Breast epithelium (tissue), 4 donors: ENCODE measurements at regions of chr3 and their contacts with region 1.

Region 1: DNA sequence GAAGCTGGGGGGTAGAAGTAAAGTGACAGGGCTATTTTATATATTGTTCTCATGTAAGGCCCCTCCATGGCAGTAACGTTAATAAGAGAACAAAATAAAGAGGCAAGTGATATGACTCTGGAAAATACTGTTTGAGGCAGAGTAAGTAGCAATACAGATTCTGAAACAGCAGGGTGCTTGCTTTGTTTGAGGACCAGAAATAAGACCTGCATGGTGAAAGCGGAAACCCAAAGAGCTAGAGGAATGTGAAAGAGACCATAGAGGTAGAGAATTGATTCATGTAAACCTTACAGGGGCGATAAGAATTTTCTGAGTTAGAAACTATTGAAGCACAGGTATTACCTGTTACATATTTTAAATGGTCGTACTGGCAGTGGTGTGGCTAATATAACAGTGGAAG is 1517.1 kb downstream of the SI start:
- DNase-seq: no peak
- H3K4me3 ChIP-seq: no peak overlapping the region
- H3K27ac ChIP-seq: no peak overlapping the region
- H3K4me1 ChIP-seq: no peaks in the 10 kb centered on the region
- H3K27me3 ChIP-seq: no peaks in the 10 kb centered on the region
- CTCF ChIP-seq: no peak
- POLR2A ChIP-seq: no peak

Region 2: DNA sequence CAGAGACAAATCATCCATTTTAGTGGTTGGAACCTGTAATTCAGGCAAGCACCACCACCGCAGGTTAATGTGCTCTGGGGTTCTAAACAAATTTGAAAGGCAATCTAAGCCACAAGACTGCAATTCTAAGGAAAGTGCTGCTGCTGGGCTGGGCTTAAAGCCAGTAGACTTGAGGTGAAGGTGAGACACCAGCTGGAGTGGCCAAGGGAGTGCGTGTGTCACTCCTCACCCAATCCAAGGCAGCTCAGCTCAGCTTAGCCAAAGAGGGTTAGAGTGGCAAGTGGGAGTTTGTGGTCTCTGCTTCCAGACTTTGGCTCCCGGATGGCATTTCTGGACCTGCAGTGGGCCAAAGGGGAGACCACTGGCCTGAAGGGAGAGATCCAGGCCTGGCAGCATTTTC is 138.5 kb before region 1 on chr3:
- intact Hi-C with region 1: loop called (anchors 5 kb)
- DNase-seq: no peak
- H3K4me3 ChIP-seq: no peak overlapping the region
- H3K27ac ChIP-seq: no peak overlapping the region
- H3K4me1 ChIP-seq: no peaks in the 10 kb centered on the region
- H3K27me3 ChIP-seq: no peaks in the 10 kb centered on the region
- CTCF ChIP-seq: no peak
- POLR2A ChIP-seq: no peak

Region 3: GRCh38 chr3:163523375-163523774 is 37.8 kb before region 1 on chr3:
- intact Hi-C with region 1: no loop called
- DNase-seq: no peak
- H3K4me3 ChIP-seq: no peak overlapping the region
- H3K27ac ChIP-seq: no peak overlapping the region
- H3K4me1 ChIP-seq: no peaks in the 10 kb centered on the region
- H3K27me3 ChIP-seq: no peaks in the 10 kb centered on the region
- CTCF ChIP-seq: no peak
- POLR2A ChIP-seq: no peak

Region 4: DNA sequence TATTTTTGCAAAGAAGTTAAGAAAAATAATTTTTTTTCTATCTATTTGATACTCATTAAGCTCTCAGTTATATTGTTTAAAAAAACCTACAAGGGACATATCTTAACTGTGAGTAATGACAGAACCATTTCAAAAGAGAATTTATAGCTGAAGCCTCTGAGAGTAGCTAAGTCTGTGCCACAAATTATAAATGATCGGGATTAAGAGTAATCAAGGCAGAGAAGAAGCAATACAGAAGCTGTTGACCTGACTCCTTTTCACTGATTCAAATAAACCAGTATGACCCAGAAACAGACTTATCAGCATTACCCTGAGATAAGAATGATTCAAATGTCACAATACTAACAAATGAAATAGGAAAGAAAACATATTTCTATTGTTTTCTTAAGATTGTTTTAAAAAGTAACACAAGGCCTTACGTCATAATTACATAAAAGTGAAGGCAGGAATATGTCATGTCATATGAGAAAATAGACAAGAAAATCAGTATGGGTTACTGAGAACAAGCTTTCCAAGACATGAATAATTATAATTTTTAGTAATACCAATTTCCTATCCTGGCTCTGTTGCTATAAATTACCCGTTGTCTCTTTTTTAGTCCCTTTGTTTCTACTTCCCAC is 17.5 kb before region 1 on chr3:
- intact Hi-C with region 1: no loop called
- DNase-seq: no peak
- H3K4me3 ChIP-seq: no peak overlapping the region
- H3K27ac ChIP-seq: no peak overlapping the region
- H3K4me1 ChIP-seq: no peaks in the 10 kb centered on the region
- H3K27me3 ChIP-seq: no peaks in the 10 kb centered on the region
- CTCF ChIP-seq: no peak
- POLR2A ChIP-seq: no peak

Region 5: DNA sequence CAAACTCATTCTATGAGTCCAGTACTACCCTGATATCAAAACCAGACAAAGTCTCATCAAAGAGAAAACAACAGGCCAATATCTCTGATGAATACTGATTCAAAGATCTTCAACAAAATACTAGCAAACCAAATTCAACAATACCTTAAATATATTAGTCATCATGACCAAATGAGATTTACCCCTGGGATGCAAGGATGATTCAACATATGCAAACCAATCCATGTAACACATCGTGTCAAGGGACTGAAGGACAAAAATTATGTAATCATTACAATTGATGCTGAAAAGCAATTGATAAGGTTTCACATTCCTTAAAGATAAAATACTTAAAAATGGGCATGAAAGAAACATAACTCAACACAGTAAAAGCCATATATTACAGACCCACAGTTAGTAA is 40.3 kb after region 1 on chr3:
- intact Hi-C with region 1: no loop called
- DNase-seq: no peak
- H3K4me3 ChIP-seq: no peak overlapping the region
- H3K27ac ChIP-seq: no peak overlapping the region
- H3K4me1 ChIP-seq: no peaks in the 10 kb centered on the region
- H3K27me3 ChIP-seq: no peaks in the 10 kb centered on the region
- CTCF ChIP-seq: no peak
- POLR2A ChIP-seq: no peak